ENCODE measurements at regions of chr4 and their contacts with region 1.

Region 1: DNA sequence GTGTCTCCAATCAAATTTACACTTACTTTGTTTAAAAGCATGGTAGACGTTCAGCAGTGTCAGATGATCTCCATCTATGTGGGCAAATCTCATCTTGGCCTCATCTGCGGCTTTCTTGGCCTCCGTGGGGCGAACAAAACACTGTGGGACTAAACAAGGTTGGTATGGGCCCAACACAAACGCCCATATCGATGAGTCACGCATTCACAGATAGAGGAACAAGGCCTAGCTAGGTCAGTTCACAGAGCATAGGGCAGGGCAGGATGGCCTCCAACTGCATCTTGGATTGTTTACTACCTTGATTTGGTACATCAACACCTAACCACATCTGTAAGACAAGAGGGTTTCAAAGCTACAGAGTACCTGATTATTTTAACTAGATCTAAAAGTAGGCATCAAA is 47.3 kb downstream of the DHX15 start:
- DNase-seq: no peak
- ATAC-seq: peak; percentile 54; the same call in 1 of the 2 replicates
- H3K4me3 ChIP-seq: no peak overlapping the region
- H3K27ac ChIP-seq: no peak overlapping the region
- H3K4me1 ChIP-seq: no peaks in the 10 kb centered on the region
- H3K27me3 ChIP-seq: no peaks in the 10 kb centered on the region
- CTCF ChIP-seq: no peak
- POLR2A ChIP-seq: no peak
- RAD21 ChIP-seq: no peak

Region 2: GRCh38 chr4:24453951-24454350 is 83.1 kb before region 1 on chr4:
- CTCF ChIA-PET with region 1: no interaction called
- POLR2A ChIA-PET with region 1: no interaction called
- RAD21 ChIA-PET with region 1: no interaction called
- intact Hi-C with region 1: no loop called
- DNase-seq: no peak
- ATAC-seq: no peak
- H3K4me3 ChIP-seq: no peak overlapping the region
- H3K27ac ChIP-seq: no peak overlapping the region
- H3K4me1 ChIP-seq: no peaks in the 10 kb centered on the region
- H3K27me3 ChIP-seq: peaks cover 18% of the 10 kb centered on the region; the same call in 1 of the 2 replicates
- CTCF ChIP-seq: no peak
- POLR2A ChIP-seq: no peak
- RAD21 ChIP-seq: no peak

Region 3: GRCh38 chr4:24551492-24552289 is 14.7 kb after region 1 on chr4:
- CTCF ChIA-PET with region 1: interaction called, 21 read pairs
- POLR2A ChIA-PET with region 1: no interaction called
- RAD21 ChIA-PET with region 1: no interaction called
- intact Hi-C with region 1: no loop called
- DNase-seq: peak; percentile 2
- ATAC-seq: no peak
- H3K4me3 ChIP-seq: no peak overlapping the region
- H3K27ac ChIP-seq: no peak overlapping the region
- H3K4me1 ChIP-seq: no peaks in the 10 kb centered on the region
- H3K27me3 ChIP-seq: no peaks in the 10 kb centered on the region
- CTCF ChIP-seq: peak in 2 of 3 experiments; percentile 30 to 61; a peak in 3 of 6 replicates
- POLR2A ChIP-seq: no peak
- RAD21 ChIP-seq: no peak

Region 4: DNA sequence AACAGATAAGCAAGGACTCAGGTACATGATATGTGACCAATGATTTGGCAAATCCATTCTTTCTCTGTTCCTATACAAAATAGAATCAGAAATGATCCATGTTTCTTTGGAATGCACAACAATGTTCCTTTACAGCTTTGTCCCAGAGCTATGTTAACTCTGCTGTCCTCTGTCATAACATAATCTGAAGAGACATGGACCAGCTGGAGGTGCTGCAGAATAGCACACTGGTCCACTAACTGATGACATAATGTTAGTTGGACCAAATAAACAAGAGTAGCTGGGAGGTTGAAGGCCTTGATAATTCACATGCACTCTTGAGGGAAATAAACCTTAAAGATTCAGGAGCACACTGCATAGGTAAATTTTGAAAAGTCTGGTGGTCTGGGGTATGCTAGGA is 70.3 kb after region 1 on chr4:
- CTCF ChIA-PET with region 1: no interaction called
- POLR2A ChIA-PET with region 1: no interaction called
- RAD21 ChIA-PET with region 1: no interaction called
- intact Hi-C with region 1: no loop called
- DNase-seq: no peak
- ATAC-seq: no peak
- H3K4me3 ChIP-seq: no peak overlapping the region
- H3K27ac ChIP-seq: no peak overlapping the region
- H3K4me1 ChIP-seq: peaks cover 0 to 4% of the 10 kb centered on the region in 2 experiments; a peak in 1 of 4 replicates
- H3K27me3 ChIP-seq: no peaks in the 10 kb centered on the region
- CTCF ChIP-seq: no peak
- POLR2A ChIP-seq: no peak
- RAD21 ChIP-seq: no peak

Region 5: GRCh38 chr4:24912252-24913118 is 375.5 kb after region 1 on chr4 and contains the start of gene CCDC149:
- CTCF ChIA-PET with region 1: no interaction called
- POLR2A ChIA-PET with region 1: no interaction called
- RAD21 ChIA-PET with region 1: no interaction called
- intact Hi-C with region 1: no loop called
- DNase-seq: peak; percentile 56
- ATAC-seq: peak; percentile 90
- H3K4me3 ChIP-seq: peak within 1 kb of the TSS; percentile 46 to 56
- H3K27ac ChIP-seq: peak within 1 kb of the TSS; percentile 73
- H3K4me1 ChIP-seq: peaks cover 10 to 13% of the 10 kb centered on the region in 2 experiments
- H3K27me3 ChIP-seq: no peaks in the 10 kb centered on the region
- CTCF ChIP-seq: no peak
- POLR2A ChIP-seq: peak; percentile 13
- RAD21 ChIP-seq: no peak
- total RNA-seq, gene CCDC149: 5.3 TPM

Region 6: GRCh38 chr4:25202431-25202830 is 665.4 kb after region 1 on chr4:
- CTCF ChIA-PET with region 1: no interaction called
- POLR2A ChIA-PET with region 1: no interaction called
- RAD21 ChIA-PET with region 1: no interaction called
- intact Hi-C with region 1: no loop called
- DNase-seq: no peak
- ATAC-seq: no peak
- H3K4me3 ChIP-seq: no peak overlapping the region
- H3K27ac ChIP-seq: no peak overlapping the region
- H3K4me1 ChIP-seq: no peaks in the 10 kb centered on the region
- H3K27me3 ChIP-seq: no peaks in the 10 kb centered on the region
- CTCF ChIP-seq: no peak
- POLR2A ChIP-seq: no peak
- RAD21 ChIP-seq: no peak